ENCODE measurements at regions of chr12 and their contacts with region 1.

Region 1: GRCh38 chr12:27179400-27180214 is 64.5 kb upstream of the STK38L start:
- DNase-seq: peak; percentile 46
- ATAC-seq: peak; percentile 93
- H3K4me3 Mint-ChIP-seq: no peak overlapping the region
- H3K27ac Mint-ChIP-seq: peak overlapping the region; percentile 0
- H3K4me1 Mint-ChIP-seq: peaks cover 22% of the 10 kb centered on the region
- H3K27me3 Mint-ChIP-seq: no peaks in the 10 kb centered on the region

Region 2: DNA sequence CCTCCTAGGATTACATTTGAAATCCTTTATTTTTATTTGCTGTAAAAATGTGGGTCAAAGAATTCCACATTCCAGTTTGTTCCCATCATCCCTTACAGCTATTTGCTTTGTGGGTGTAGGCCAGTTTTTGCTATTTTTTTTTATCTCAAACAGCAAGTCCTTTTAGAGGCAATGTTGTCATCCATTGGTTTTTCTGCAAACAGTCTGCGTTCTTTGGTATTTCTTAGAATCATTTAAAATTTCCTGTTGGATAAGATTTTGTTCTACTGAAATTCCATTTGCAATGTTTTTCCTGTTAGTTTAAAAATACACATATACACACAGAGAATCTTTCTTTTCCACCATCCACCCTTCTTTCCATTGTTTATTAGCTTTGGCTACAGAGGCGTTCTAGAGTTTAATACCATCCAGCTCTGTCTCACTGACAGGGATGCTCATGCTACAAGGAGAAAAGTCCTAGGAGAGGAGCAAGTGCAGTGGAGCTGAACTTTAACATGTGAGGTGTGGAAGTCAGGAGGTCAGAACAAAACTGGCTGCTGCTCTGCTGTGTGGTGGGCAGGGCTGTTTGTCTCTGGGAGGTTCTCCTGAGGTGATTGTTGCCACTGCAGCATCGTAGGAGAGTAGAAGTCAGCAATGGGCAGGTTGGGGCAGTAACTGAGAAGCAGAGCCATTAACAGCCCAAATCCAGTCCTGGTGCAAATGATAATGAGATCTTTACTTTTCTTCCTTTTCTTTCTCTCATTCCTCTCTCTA is 11.3 kb after region 1 on chr12:
- CTCF ChIA-PET with region 1: interaction called, 10 read pairs
- POLR2A ChIA-PET with region 1: no interaction called
- DNase-seq: no peak
- ATAC-seq: no peak
- H3K4me3 Mint-ChIP-seq: no peak overlapping the region
- H3K27ac Mint-ChIP-seq: no peak overlapping the region
- H3K4me1 Mint-ChIP-seq: peaks cover 6% of the 10 kb centered on the region
- H3K27me3 Mint-ChIP-seq: peaks cover 2% of the 10 kb centered on the region

Measured in activated CD8-positive, alpha-beta T cell treated with anti-CD3 and anti-CD28 coated beads, Interleukin-2, amount 10 ng/mL, durations not matched to agents 7 days and 5 days (primary cell).